ENCODE measurements at regions of chrX and their contacts with region 1.

Region 1: DNA sequence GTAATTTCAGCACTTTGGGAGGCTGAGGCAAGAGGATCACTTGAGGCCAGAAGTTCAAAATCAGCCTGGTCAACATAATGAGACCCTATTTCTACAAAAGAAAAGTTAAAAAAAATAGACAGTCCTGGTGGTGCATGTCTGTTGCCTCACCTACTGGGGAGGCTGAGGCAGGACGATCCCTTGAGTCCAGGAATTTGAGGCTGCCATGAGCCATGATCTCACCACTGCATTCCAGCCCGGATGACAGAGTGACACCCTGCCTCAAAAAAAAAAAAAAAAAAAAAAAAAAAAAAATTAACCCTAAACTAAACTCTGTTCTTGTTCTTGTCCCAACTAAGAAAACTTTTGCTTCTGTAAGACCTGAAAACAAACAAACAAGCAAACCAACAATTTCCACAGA is 118.1 kb downstream of the IDS start:
- DNase-seq: no peak
- H3K4me3 ChIP-seq: no peak overlapping the region
- H3K27ac ChIP-seq: no peak overlapping the region
- H3K4me1 ChIP-seq: no peaks in the 10 kb centered on the region
- H3K27me3 ChIP-seq: no peaks in the 10 kb centered on the region
- CTCF ChIP-seq: no peak

Region 2: GRCh38 chrX:149346306-149346705 is 40.7 kb before region 1 on chrX:
- intact Hi-C with region 1: loop called (anchors 2 kb)
- DNase-seq: no peak
- H3K4me3 ChIP-seq: no peak overlapping the region
- H3K27ac ChIP-seq: no peak overlapping the region
- H3K4me1 ChIP-seq: no peaks in the 10 kb centered on the region
- H3K27me3 ChIP-seq: no peaks in the 10 kb centered on the region
- CTCF ChIP-seq: no peak

Region 3: GRCh38 chrX:149453030-149453429 is 66.0 kb after region 1 on chrX:
- intact Hi-C with region 1: no loop called
- DNase-seq: no peak
- H3K4me3 ChIP-seq: no peak overlapping the region
- H3K27ac ChIP-seq: no peak overlapping the region
- H3K4me1 ChIP-seq: no peaks in the 10 kb centered on the region
- H3K27me3 ChIP-seq: no peaks in the 10 kb centered on the region
- CTCF ChIP-seq: no peak